ENCODE measurements at regions of chr4 and their contacts with region 1.

Region 1: DNA sequence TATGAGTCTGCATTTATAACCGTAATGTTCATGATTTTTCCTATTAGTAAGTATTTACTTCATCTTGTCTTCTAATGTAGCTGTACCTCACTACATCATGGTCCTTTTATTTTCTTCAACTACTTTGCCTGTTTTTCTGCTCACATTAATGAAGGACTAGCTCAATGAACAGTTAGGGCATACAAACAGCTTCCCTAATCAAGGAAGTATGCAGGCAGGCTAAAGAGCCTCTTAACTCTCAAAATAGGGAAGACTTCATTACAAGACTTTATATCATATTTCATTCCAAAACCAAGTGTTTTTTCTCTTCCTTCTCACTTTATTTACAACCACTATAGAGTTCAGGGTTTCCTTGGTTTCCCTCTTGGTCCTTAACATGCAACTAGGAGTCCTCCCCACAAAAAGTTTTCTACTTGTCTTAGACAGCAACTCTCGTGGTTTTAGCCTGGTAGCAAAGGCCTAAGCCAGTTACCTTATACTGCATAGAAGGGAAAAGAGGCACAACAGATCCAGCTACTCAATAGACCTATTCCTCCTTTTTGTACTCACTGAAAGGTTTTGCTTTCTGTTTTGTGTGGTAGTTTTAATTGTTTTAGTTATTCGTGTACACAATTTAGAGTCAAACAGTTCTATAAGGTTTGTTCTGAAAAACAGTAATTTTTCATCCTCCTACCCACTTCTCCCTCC is 40.8 kb downstream of the SMIM14 start:
- DNase-seq: no peak
- H3K4me3 ChIP-seq: no peak overlapping the region
- H3K27ac ChIP-seq: no peak overlapping the region
- H3K27me3 ChIP-seq: no peaks in the 10 kb centered on the region
- CTCF ChIP-seq: no peak

Region 2: GRCh38 chr4:39609454-39609931 is 11.7 kb after region 1 on chr4:
- CTCF ChIA-PET with region 1: no interaction called
- POLR2A ChIA-PET with region 1: interaction called, 10 read pairs
- DNase-seq: no peak
- H3K4me3 ChIP-seq: no peak overlapping the region
- H3K27ac ChIP-seq: no peak overlapping the region
- H3K27me3 ChIP-seq: no peaks in the 10 kb centered on the region
- CTCF ChIP-seq: no peak

Measured in AG04450 (cell line).